Activated CD8-positive, alpha-beta T cell treated with anti-CD3 and anti-CD28 coated beads for 36 hours (primary cell): ENCODE measurements at regions of chr11 and their contacts with region 1.

Region 1: DNA sequence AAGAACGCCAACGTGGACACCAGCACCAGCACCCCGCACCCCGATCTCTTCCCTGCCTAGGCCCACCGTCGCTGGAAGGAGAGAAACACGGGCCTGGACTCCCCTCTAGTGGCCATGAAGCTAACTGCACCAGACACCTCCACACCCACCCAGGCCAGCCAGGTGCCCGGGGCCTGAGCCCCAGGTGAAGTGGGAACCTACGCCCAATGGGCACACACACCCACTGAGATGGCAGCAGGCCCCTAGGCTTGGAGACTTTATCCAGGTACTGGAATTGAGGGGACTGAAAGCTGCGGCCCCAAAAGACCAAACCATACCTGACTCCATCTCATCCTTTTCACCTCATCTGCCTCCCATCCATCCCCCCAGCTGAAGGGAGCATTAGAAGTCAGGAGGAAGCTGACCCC is 81.0 kb downstream of the BUD13 start:
- DNase-seq: peak; percentile 75
- ATAC-seq: peak; percentile 94
- H3K4me3 Mint-ChIP-seq: no peak overlapping the region
- H3K27ac Mint-ChIP-seq: no peak overlapping the region
- H3K4me1 Mint-ChIP-seq: no peaks in the 10 kb centered on the region
- H3K27me3 Mint-ChIP-seq: peaks cover 3% of the 10 kb centered on the region
- CTCF ChIP-seq: peak; percentile 80

Region 2: GRCh38 chr11:115334932-115335788 is 1356.6 kb before region 1 on chr11:
- CTCF ChIA-PET with region 1: interaction called, 3 read pairs
- POLR2A ChIA-PET with region 1: no interaction called
- intact Hi-C with region 1: loop called (anchors 10 kb)
- DNase-seq: no peak
- ATAC-seq: no peak
- H3K4me3 Mint-ChIP-seq: no peak overlapping the region
- H3K27ac Mint-ChIP-seq: no peak overlapping the region
- H3K4me1 Mint-ChIP-seq: no peaks in the 10 kb centered on the region
- H3K27me3 Mint-ChIP-seq: no peaks in the 10 kb centered on the region
- CTCF ChIP-seq: peak; percentile 80

Region 3: DNA sequence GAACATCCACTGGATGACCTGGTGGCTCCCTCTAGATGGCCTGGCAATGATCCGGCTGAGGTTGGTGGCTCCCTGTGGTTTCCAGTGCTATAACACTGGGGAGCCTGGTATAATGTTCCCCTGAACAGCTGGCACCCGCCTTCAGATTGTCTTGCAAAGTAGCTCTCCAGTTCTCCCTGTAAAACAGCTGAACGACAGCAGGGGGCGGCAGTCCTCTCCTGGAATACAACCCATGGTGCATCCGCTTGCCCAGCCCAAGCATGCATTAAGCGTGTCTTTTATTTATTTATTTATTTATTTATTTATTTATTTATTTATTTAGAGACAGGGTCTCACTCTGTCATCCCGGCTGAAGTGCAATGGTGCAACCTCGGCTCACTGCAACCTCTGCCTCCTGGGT is 177.9 kb before region 1 on chr11:
- CTCF ChIA-PET with region 1: interaction called, 6 read pairs
- POLR2A ChIA-PET with region 1: no interaction called
- intact Hi-C with region 1: loop called (anchors 5 kb)
- DNase-seq: peak; percentile 52
- ATAC-seq: no peak
- H3K4me3 Mint-ChIP-seq: no peak overlapping the region
- H3K27ac Mint-ChIP-seq: no peak overlapping the region
- H3K4me1 Mint-ChIP-seq: no peaks in the 10 kb centered on the region
- H3K27me3 Mint-ChIP-seq: peaks cover 12% of the 10 kb centered on the region
- CTCF ChIP-seq: no peak